PC-3 (cell line): ENCODE measurements at regions of chr19 and their contacts with region 1.

Region 1: DNA sequence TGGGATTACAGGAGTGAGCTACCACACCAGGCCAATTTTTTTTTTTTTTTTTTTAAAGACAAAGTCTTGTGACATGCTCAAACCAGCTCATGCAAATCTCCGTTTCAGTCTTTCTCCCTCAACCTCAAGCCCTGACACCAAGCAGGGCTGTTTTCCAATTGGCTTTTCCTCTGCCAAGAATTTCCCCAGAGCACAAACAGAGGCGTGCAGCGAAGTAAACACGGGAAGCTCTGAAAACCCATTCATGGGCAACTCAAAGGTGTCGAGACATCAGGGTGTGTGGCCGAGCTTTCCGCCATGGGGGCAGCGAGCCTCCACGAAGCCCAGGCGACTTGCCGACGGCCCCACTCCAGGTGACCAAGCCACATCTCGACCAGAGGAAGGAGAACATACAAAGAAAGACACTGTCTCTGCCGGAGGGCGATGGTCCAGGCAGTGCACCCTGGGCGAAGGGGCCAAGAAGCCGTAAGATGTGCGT is 70.0 kb downstream of the INSR start:
- DNase-seq: peak; percentile 16
- ATAC-seq: peak; percentile 76
- H3K4me3 ChIP-seq: no peak overlapping the region
- H3K27ac ChIP-seq: no peak overlapping the region
- H3K4me1 ChIP-seq: no peaks in the 10 kb centered on the region
- H3K27me3 ChIP-seq: no peaks in the 10 kb centered on the region
- CTCF ChIP-seq: no peak

Region 2: GRCh38 chr19:7258035-7258839 is 34.0 kb after region 1 on chr19:
- CTCF ChIA-PET with region 1: no interaction called
- POLR2A ChIA-PET with region 1: interaction called, 18 read pairs
- intact Hi-C with region 1: no loop called
- DNase-seq: no peak
- ATAC-seq: no peak
- H3K4me3 ChIP-seq: no peak overlapping the region
- H3K27ac ChIP-seq: no peak overlapping the region
- H3K4me1 ChIP-seq: peaks cover 7% of the 10 kb centered on the region; the same call in 1 of the 2 replicates
- H3K27me3 ChIP-seq: no peaks in the 10 kb centered on the region
- CTCF ChIP-seq: no peak